ENCODE measurements at regions of chr11 and their contacts with region 1.

Region 1: GRCh38 chr11:66579017-66579606 is 10.7 kb upstream of the CTSF start:
- DNase-seq: peak; percentile 81
- H3K4me3 ChIP-seq: no peak overlapping the region
- H3K27ac ChIP-seq: no peak overlapping the region
- H3K4me1 ChIP-seq: no peaks in the 10 kb centered on the region
- H3K27me3 ChIP-seq: peaks cover 16% of the 10 kb centered on the region
- CTCF ChIP-seq: peak; percentile 78 to 88 (median 86)
- EP300 ChIP-seq: no peak
- POLR2A ChIP-seq: no peak

Region 2: DNA sequence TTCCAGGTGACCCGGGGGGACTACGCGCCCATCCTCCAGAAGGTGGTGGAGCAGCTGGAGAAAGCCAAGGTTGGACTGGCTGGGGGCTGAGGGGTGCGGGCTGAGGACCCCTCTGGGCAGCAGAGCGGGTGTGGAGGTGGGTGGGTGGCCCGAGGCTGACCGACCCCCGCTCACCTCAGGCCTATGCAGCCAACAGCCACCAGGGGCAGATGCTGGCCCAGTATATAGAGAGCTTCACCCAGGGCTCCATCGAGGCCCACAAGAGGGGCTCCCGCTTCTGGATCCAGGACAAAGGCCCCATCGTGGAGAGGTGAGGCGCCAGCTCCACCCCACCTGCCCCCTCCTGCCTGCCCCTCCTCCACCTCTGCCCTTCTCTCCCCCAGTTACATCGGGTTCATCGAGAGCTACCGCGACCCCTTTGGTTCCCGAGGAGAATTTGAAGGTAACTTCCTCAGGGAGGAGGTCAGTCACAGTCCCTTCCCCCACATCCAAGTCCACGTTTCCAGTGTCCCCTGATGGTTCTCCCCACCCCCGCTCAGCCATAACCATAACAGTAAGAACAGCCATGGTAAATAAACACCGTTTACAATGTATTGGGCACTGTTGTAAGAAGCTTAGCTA is 87.7 kb before region 1 on chr11:
- in situ Hi-C with region 1: no loop called
- intact Hi-C with region 1: no loop called
- DNase-seq: no peak
- H3K4me3 ChIP-seq: no peak overlapping the region
- H3K27ac ChIP-seq: no peak overlapping the region
- H3K4me1 ChIP-seq: peaks cover 0 to 5% (median 0%) of the 10 kb centered on the region in 4 donors
- H3K27me3 ChIP-seq: no peaks in the 10 kb centered on the region
- CTCF ChIP-seq: peak in 1 of 5 experiments; percentile 12
- EP300 ChIP-seq: no peak
- POLR2A ChIP-seq: no peak

Region 3: GRCh38 chr11:66677599-66678375 is 98.7 kb after region 1 on chr11 and contains the start of gene RBM4B:
- in situ Hi-C with region 1: loop called (anchors 5 to 10 kb)
- intact Hi-C with region 1: loop called (anchors 1 kb)
- DNase-seq: peak; percentile 97
- H3K4me3 ChIP-seq: peak within 1 kb of the TSS; percentile 53 to 78 (median 68)
- H3K27ac ChIP-seq: peak within 1 kb of the TSS; percentile 90 to 99 (median 96)
- H3K4me1 ChIP-seq: peaks cover 17 to 37% (median 24%) of the 10 kb centered on the region in 4 donors
- H3K27me3 ChIP-seq: no peaks in the 10 kb centered on the region
- CTCF ChIP-seq: no peak
- EP300 ChIP-seq: no peak
- POLR2A ChIP-seq: peak; percentile 77
- total RNA-seq, gene RBM4B: 14.2 to 22.1 (median 15.5) TPM

Region 4: DNA sequence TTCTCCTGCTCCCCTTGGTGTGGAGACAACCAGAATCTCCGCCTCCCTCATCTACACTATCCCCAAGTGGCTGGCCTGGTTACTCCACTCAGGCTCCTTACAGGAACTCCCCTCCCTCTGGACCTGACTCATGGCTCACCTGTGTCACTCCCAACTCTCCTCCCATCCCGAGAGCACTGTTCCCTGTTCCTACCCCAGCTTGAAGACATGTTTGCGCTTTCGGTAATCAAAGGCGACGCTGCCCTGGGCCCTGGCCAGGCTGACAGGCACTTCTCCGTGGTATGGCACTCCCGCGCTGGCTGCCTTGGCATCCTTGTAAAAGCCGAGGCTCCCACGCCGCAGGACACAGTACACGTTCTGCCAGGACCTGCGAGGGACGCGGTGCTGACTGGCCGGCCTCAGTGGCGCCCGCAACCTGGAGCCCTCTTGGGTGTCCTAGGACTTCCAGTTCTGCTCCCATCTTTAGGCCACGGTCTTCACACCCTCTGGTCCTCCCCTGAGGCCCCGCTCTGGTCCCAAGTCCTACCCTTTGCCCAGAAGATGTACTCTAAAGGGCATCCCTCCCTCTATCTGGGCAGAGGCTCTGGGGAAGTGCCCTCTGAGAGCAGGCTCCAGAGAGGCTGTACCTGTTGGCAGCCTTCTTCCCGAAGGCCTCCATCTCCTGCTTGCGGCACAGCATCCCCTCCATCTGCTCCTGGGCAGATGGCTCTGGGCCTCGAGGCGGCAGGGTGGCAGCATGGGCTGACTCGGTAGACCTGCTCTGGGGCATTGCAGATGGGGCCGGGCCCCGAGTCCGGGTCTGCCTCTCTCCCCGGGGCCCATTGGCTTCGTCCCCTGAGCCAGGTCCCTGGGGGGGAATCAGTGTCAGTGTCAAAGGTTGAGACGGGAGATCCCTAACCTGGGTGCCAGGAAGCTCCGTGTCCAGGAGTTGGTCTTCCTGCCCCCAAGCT is 108.0 kb after region 1 on chr11:
- in situ Hi-C with region 1: loop called in 1 of 4 experiments (anchors 5 kb)
- intact Hi-C with region 1: no loop called
- DNase-seq: no peak
- H3K4me3 ChIP-seq: no peak overlapping the region
- H3K27ac ChIP-seq: no peak overlapping the region
- H3K4me1 ChIP-seq: no peaks in the 10 kb centered on the region
- H3K27me3 ChIP-seq: no peaks in the 10 kb centered on the region
- CTCF ChIP-seq: no peak
- EP300 ChIP-seq: no peak
- POLR2A ChIP-seq: no peak

Region 5: DNA sequence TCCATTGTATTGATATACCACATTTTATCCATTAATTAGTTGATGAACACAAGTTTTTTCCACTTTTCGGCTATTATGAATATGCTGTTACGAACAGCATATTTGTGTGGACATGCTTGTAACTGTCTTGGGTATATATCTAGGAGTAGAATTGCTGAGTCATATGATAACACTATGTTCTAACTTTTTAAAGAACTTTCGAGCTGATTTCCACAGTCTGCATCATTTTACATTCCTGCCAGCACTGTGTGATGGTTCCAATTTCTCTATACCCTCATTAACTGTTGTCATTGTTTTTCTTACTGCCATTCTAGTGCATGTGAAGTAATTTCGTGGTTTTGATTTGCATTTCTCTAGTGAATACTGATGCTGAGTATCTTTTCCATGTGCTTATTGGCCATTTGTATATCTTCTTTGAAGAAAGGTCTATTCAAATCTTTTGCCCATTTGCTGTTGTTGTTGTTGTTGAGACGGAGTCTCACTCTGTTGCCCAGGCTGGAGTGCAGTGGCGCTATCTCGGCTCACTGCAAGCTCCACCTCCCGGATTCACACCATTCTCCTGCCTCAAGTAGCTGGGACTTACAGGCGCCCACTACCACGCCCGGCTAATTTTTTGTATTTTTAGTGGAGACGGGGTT is 256.8 kb after region 1 on chr11:
- in situ Hi-C with region 1: loop called in 2 of 4 experiments (anchors 10 to 25 kb)
- intact Hi-C with region 1: no loop called
- DNase-seq: no peak
- H3K4me3 ChIP-seq: no peak overlapping the region
- H3K27ac ChIP-seq: no peak overlapping the region
- H3K4me1 ChIP-seq: peaks cover 0 to 10% (median 0%) of the 10 kb centered on the region in 4 donors
- H3K27me3 ChIP-seq: no peaks in the 10 kb centered on the region
- CTCF ChIP-seq: no peak
- EP300 ChIP-seq: no peak
- POLR2A ChIP-seq: no peak

Measured in transverse colon (tissue), 4 donors.